Right ventricle myocardium superior (tissue), 1 donor: ENCODE measurements at regions of chr12 and their contacts with region 1.

Region 1: DNA sequence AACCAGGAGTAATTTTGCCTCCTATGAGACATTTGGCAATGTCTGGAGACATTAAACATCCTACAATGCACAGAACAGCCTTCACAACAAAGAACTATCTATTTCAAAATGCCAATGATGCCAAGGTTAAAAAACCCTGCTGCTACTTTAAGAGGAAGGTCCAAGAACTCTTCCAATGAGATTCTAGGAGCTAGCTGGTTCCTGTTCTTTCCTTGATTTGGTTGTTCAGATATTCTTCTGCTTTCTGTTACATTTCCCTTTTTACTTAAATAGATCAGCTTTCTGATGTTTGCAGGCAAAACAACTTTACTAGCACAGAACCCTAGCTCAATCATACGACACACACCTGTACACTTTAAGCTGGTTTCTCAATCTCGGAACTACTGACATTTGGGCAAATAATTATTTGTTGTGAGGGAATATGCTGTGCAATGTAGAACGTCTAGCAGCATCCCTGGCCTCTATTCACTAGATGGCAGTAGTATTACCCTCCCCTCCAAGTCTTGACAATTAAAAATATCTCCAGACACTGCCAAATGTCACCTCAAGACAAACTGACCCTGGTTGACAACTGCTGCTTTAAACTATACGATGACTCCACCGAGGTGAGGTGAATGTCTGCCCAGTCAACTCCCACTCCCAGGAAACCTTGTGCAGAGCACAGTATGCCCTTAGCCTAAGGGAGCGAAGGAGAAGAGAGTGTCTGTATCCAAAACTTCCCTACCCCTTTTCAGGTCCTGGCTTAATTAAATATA is 4.4 kb downstream of the BLTP3B start:
- DNase-seq: no peak
- ATAC-seq: no peak

Region 2: GRCh38 chr12:100266835-100267618 is 128.8 kb after region 1 on chr12 and contains the starts of genes DEPDC4 and SCYL2:
- intact Hi-C with region 1: loop called (anchors 10 kb)
- DNase-seq: peak; percentile 96
- ATAC-seq: peak; percentile 98
- total RNA-seq, gene DEPDC4: 0.32 TPM
- total RNA-seq, gene SCYL2: 24.7 TPM